ENCODE measurements at regions of chr11 and their contacts with region 1.

Region 1: GRCh38 chr11:1733716-1734640 is 16.4 kb downstream of the IFITM10 start:
- DNase-seq: no peak
- ATAC-seq: no peak
- H3K4me3 ChIP-seq: no peak overlapping the region
- H3K4me3 Mint-ChIP-seq: no peak overlapping the region
- H3K27ac ChIP-seq: no peak overlapping the region
- H3K27ac Mint-ChIP-seq: no peak overlapping the region
- H3K4me1 ChIP-seq: peaks cover 25% of the 10 kb centered on the region
- H3K4me1 Mint-ChIP-seq: peaks cover 33% of the 10 kb centered on the region
- H3K27me3 ChIP-seq: peaks cover 0 to 10% of the 10 kb centered on the region in 2 experiments
- H3K27me3 Mint-ChIP-seq: peaks cover 14% of the 10 kb centered on the region
- CTCF ChIP-seq: no peak

Region 2: GRCh38 chr11:1778141-1778911 is 44.3 kb after region 1 on chr11:
- CTCF ChIA-PET with region 1: no interaction called
- POLR2A ChIA-PET with region 1: no interaction called
- intact Hi-C with region 1: loop called in 1 of 2 experiments (anchors 2 kb)
- DNase-seq: peak in 1 of 9 experiments; percentile 1
- ATAC-seq: no peak
- H3K4me3 ChIP-seq: no peak overlapping the region
- H3K4me3 Mint-ChIP-seq: no peak overlapping the region
- H3K27ac ChIP-seq: no peak overlapping the region
- H3K27ac Mint-ChIP-seq: no peak overlapping the region
- H3K4me1 ChIP-seq: no peaks in the 10 kb centered on the region
- H3K4me1 Mint-ChIP-seq: peaks cover 6% of the 10 kb centered on the region
- H3K27me3 ChIP-seq: no peaks in the 10 kb centered on the region
- H3K27me3 Mint-ChIP-seq: no peaks in the 10 kb centered on the region
- CTCF ChIP-seq: no peak

Measured in CD8-positive, alpha-beta T cell (primary cell).